ENCODE measurements at regions of chr1 and their contacts with region 1.

Region 1: DNA sequence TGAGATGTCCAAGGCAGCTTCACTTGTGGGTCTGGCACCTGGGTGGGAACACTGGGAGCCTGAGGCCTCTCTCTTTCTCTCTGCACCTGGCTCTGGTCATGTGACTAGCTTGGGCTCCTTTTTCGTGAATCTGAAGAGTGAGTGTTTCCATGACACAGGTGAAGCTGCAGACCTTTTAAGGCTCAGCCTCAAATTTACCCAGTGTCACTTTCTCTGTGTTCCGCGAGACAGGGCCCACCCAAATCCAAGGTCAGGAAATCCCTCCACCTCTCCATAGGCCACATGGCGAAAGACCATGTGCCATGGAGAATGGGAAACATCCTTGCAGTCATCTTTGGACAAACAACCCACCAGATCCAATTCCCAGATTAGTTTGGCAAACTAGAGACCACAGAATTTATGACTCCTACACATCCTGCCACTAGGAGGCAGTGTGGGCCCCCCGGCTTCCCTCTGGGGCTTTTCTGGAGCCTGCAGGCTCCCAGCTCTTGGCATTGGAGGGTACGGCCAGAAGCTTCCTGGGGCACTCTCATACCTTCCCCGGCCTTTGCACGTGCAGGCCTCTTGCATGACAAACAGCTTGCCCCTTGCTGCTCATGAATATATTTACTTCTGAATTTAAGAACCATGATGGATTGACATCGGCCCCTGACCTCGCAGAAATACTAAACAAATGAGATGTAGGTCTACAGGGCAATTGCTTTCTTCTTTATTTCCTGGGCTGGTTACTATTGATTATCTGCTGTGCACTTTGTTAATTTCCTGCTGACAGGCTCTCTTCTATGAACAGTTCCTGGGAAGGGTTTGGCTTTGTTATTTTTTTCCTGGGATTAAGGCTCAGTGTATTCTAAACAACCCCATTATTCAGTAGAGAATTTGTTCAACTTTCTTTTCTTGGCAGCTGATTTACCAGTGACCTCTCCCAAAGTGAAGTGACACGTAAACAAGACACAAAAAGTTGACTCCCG is 180.7 kb downstream of the KAZN start:
- DNase-seq: no peak
- H3K4me3 Mint-ChIP-seq: no peak overlapping the region
- H3K27ac Mint-ChIP-seq: no peak overlapping the region
- H3K4me1 Mint-ChIP-seq: no peaks in the 10 kb centered on the region
- H3K27me3 Mint-ChIP-seq: peaks cover 2% of the 10 kb centered on the region

Region 2: GRCh38 chr1:15046487-15047165 is 267.4 kb after region 1 on chr1:
- intact Hi-C with region 1: loop called (anchors 5 kb)
- DNase-seq: peak; percentile 20
- H3K4me3 Mint-ChIP-seq: no peak overlapping the region
- H3K27ac Mint-ChIP-seq: no peak overlapping the region
- H3K4me1 Mint-ChIP-seq: no peaks in the 10 kb centered on the region
- H3K27me3 Mint-ChIP-seq: no peaks in the 10 kb centered on the region

Region 3: GRCh38 chr1:15100121-15100874 is 321.1 kb after region 1 on chr1:
- intact Hi-C with region 1: loop called (anchors 5 kb)
- DNase-seq: peak; percentile 41
- H3K4me3 Mint-ChIP-seq: no peak overlapping the region
- H3K27ac Mint-ChIP-seq: no peak overlapping the region
- H3K4me1 Mint-ChIP-seq: peaks cover 10% of the 10 kb centered on the region
- H3K27me3 Mint-ChIP-seq: peaks cover 18% of the 10 kb centered on the region